ENCODE measurements at regions of chr12 and their contacts with region 1.

Region 1: DNA sequence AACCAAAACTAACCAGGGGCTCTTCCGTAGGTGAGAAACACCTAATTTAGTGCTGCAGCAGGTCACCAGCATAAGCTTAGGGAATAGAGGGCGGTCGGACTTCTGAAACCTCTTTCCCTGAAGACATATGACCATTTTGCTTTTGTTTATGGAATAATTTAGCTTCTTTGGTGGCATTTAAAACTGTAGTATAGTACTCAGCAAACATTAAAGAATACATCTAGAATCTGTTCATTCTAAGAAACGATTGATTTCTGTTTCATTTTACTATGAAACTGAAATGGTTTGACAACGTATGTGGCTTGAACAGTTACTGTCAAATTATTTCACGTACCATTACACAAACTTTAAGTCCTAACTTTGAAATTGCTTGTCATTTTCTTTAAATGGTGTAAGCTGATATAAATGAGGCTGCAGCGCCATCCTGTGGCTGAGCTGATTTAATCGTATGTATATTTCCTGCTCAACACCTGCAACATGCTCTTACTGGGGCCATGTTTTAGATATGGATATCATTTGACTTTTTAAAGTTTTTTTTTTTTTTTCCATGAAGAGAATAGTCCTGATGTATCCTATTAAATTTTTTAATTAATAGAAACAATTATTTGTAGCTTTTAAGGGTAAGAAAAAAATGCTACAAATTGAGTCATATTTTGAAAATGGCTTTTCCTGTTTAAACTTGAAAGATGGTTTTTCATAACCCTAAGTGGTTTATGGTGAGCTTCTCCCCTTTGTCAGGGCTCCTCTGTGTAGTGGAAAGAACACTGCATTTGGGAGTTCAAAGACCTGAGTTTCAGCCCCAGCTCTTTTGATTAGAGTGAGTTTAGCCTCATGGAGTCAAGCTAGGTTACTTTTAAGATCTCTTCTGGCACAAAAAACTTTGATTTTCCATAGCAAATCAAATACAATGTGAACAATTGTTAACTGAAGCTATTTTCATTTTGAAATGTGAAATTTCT is 27.4 kb downstream of the CFAP54 start:
- DNase-seq: peak; percentile 74 to 90 (median 76)
- ATAC-seq: peak; percentile 65 to 81
- H3K4me3 ChIP-seq: no peak overlapping the region
- H3K27ac ChIP-seq: no peak overlapping the region
- H3K4me1 ChIP-seq: no peaks in the 10 kb centered on the region
- H3K27me3 ChIP-seq: no peaks in the 10 kb centered on the region

Region 2: DNA sequence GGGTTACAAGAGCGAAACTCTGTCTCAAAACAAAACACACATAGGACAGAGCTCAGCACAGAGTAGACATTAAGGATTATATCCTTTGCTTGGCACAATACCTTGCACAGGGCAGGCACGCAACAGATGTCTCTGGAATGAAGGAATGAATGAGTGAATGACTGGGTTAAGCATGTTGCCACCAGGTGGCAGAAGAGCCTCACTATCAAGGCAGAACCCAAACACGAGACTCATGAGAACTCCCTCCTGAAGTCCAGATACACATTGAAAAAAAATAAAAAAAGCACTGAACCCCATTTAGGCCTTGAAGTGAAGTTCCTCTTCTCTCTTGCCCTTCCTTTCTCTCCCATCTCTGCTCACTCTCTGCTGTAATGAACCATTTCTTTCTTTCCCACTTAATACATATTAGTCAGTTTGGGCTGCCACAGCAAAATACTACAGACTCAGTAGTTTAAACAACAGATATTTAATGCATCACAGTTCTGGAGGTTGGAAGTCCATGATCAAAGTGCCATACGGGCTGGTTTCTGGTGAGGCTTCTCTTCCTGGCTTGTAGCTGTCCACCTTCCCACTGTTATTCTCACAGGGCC is 454.8 kb before region 1 on chr12:
- intact Hi-C with region 1: loop called (anchors 2 to 10 kb)
- DNase-seq: peak; percentile 75 to 88 (median 76)
- ATAC-seq: peak; percentile 83 to 88
- H3K4me3 ChIP-seq: no peak overlapping the region
- H3K27ac ChIP-seq: no peak overlapping the region
- H3K4me1 ChIP-seq: no peaks in the 10 kb centered on the region
- H3K27me3 ChIP-seq: no peaks in the 10 kb centered on the region

Measured in right cardiac atrium (tissue), 5 donors.